GM18951 (cell line): ENCODE measurements at regions of chr16 and their contacts with region 1.

Region 1: GRCh38 chr16:48687421-48688038 is 77.5 kb upstream of the N4BP1 start:
- POLR2A ChIP-seq: no peak

Region 2: GRCh38 chr16:48318630-48319029 is 368.9 kb before region 1 on chr16:
- in situ Hi-C with region 1: no loop called
- POLR2A ChIP-seq: no peak

Region 3: GRCh38 chr16:48385272-48386150 is 302.0 kb before region 1 on chr16 and contains the start of gene SIAH1:
- in situ Hi-C with region 1: no loop called
- POLR2A ChIP-seq: peak; percentile 95

Region 4: GRCh38 chr16:48444574-48444973 is 243.0 kb before region 1 on chr16:
- in situ Hi-C with region 1: no loop called
- POLR2A ChIP-seq: no peak

Region 5: DNA sequence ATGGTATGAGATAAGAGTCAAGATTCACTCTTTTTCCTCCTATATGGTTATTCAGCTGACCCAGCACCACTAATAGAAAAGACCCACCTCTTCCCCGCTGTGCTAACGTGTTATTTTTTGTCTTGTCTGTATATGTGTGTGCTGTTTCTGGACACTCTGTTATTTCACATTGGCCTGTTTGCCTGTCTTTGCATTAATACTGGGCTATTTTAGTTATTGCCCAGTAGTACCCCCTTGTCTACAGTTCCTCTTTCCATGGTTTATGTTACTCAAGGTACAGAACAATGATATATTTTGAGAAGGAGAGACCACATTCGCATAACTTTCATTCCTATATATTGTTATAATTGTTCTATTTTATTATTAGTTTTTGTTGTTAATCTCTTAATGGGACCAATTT is 228.4 kb before region 1 on chr16:
- in situ Hi-C with region 1: no loop called
- POLR2A ChIP-seq: no peak

Region 6: GRCh38 chr16:49350265-49351095 is 663.0 kb after region 1 on chr16:
- in situ Hi-C with region 1: loop called (anchors 25 kb)
- POLR2A ChIP-seq: no peak